PC-9 (cell line): ENCODE measurements at regions of chr18 and their contacts with region 1.

Region 1: DNA sequence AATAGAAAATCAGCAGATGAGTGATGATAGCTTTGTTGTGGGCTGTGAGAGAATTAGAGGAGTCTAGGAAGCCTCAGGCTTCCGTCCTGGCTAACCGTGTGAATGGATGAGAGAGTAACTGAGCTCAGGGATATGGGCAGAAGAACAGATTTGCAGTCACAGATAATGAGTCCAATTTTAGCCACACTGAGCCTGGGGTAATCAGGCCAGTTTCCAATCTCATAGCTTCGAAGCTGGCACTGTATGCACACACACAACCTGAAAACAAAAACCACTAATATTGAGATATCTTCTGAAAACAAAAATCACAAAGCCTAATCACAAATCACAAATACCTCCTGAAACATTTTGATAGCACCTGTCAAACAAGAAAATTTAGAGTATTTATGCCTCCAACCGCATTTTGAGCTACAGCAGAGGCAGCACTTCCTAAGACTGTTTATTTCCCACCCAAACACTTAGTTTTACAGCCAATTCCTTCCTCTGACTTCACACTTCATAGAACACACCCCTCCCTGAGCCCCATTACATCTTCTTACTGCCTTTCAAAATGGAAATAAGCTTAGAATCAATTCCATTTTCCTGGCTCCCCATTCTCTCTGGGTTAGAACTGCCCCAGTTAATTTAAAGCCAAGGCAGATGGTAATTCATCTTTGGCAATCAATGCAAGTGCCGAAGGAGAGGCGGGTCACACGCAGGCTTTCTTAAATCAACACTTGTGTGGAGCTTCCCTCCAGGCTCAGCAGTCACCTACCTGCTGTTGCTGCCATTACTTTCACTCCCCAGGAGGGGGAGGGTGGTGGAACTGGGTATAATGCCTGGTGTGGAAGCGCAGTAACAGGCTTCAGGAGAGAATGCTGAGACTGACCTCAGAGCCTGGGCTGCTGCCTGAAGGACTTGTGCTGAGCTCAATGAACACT is 18.9 kb downstream of the TTR start:
- DNase-seq: no peak
- H3K4me3 ChIP-seq: no peak overlapping the region
- H3K27ac ChIP-seq: no peak overlapping the region
- H3K4me1 ChIP-seq: no peaks in the 10 kb centered on the region
- H3K27me3 ChIP-seq: no peaks in the 10 kb centered on the region
- CTCF ChIP-seq: no peak

Region 2: DNA sequence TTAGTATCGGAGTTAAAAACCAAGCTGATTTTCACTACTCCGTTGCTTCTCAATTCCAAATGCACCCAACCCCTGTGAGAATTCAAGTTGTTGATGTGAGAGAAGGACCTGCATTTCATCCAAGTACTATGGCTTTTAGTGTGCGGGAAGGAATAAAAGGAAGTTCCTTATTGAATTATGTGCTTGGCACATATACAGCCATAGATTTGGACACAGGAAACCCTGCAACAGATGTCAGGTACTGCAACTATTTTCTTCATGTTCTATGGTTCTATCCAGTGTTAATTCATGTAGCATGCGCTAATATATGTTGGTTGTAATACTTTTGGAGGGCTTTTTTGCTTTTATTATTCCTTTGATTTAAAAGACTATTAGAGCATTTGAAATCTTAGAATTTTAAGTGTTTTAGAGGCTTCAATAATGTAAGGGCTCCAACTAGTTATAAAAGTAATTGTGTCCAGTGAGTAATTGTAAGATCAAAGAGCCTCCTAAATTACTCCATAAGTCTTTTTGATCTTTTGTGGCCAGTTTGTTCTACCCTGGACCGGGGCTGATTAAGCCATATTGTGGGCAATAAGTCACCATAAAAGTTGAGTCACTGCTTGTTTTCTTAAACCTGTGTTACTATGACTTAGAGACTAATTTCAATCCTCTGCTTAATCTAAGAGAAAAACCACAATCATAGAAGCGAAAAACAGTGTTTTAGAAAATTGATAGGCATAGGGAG is 211.1 kb before region 1 on chr18:
- CTCF ChIA-PET with region 1: no interaction called
- POLR2A ChIA-PET with region 1: interaction called, 12 read pairs
- intact Hi-C with region 1: no loop called
- DNase-seq: peak in 1 of 2 experiments; percentile 50
- H3K4me3 ChIP-seq: no peak overlapping the region
- H3K27ac ChIP-seq: no peak overlapping the region
- H3K4me1 ChIP-seq: peaks cover 18% of the 10 kb centered on the region
- H3K27me3 ChIP-seq: no peaks in the 10 kb centered on the region
- CTCF ChIP-seq: no peak